ENCODE measurements at regions of chr12 and their contacts with region 1.

Region 1: DNA sequence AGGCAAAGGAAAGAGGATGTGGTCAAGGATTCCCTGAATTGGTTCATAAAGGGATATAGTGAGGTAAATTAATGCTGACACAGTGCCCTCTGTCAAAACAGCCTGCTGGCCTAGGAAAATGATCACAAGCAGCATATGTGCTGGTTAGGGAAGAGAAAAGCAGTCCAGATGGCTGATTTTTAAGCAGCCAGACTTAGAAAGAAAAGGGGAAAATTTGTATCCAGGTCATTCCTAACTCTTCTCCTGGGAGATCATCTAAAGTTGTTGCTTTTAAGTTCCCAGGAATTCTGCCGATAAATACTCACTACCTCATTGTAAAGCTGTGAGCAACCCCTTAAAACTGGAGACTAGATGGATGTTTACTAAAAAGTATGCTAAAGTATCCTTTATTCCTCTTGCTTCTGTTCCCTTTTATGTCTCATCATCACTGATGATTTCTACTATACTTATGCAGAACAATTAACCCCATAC is 46.4 kb upstream of the CNOT2 start:
- DNase-seq: no peak
- ATAC-seq: no peak
- H3K4me3 ChIP-seq: no peak overlapping the region
- H3K27ac ChIP-seq: no peak overlapping the region
- H3K4me1 ChIP-seq: no peaks in the 10 kb centered on the region
- H3K27me3 ChIP-seq: no peaks in the 10 kb centered on the region
- CTCF ChIP-seq: no peak
- EP300 ChIP-seq: no peak
- POLR2A ChIP-seq: no peak
- RAD21 ChIP-seq: no peak

Region 2: GRCh38 chr12:70227911-70228310 is 31.1 kb after region 1 on chr12:
- CTCF ChIA-PET with region 1: no interaction called
- POLR2A ChIA-PET with region 1: no interaction called
- in situ Hi-C with region 1: no loop called
- intact Hi-C with region 1: loop called (anchors 1 kb)
- DNase-seq: no peak
- ATAC-seq: no peak
- H3K4me3 ChIP-seq: no peak overlapping the region
- H3K27ac ChIP-seq: no peak overlapping the region
- H3K4me1 ChIP-seq: no peaks in the 10 kb centered on the region
- H3K27me3 ChIP-seq: no peaks in the 10 kb centered on the region
- CTCF ChIP-seq: no peak
- EP300 ChIP-seq: no peak
- POLR2A ChIP-seq: no peak
- RAD21 ChIP-seq: no peak

Region 3: DNA sequence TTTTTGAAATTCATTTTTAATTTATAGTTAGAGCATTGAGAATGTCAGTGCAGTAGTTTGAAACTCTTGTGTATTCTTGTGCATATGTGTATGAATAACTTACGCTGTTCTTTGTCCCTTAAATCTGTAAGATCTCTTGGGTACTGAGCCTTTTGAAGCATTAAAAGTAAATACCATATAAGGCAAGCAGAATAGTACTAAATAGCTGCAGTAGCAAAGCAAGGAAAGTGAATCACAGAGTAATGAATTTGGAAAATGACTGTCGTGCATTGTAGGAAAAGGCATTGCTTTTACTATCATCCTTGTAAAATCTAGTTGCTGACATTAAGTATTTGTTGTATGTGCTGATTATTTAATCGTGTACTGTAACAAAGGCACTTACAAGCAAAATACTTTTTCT is 58.5 kb after region 1 on chr12:
- CTCF ChIA-PET with region 1: no interaction called
- POLR2A ChIA-PET with region 1: no interaction called
- in situ Hi-C with region 1: no loop called
- intact Hi-C with region 1: no loop called
- DNase-seq: no peak
- ATAC-seq: no peak
- H3K4me3 ChIP-seq: no peak overlapping the region
- H3K27ac ChIP-seq: no peak overlapping the region
- H3K4me1 ChIP-seq: peaks cover 0 to 11% of the 10 kb centered on the region in 2 experiments; a peak in 2 of 5 replicates
- H3K27me3 ChIP-seq: no peaks in the 10 kb centered on the region
- CTCF ChIP-seq: no peak
- EP300 ChIP-seq: no peak
- POLR2A ChIP-seq: no peak
- RAD21 ChIP-seq: no peak